ENCODE measurements at regions of chr11 and their contacts with region 1.

Region 1: GRCh38 chr11:75142714-75143419 is 8.0 kb upstream of the SLCO2B1 start:
- DNase-seq: no peak
- H3K4me3 ChIP-seq: no peak overlapping the region
- H3K27ac ChIP-seq: peak overlapping the region in 2 of 4 donors; percentile 19 to 42
- H3K4me1 ChIP-seq: peaks cover 9 to 40% (median 11%) of the 10 kb centered on the region in 3 donors
- H3K27me3 ChIP-seq: peaks cover 0 to 8% (median 0%) of the 10 kb centered on the region in 4 donors
- CTCF ChIP-seq: peak in 2 of 6 experiments; percentile 3 to 12
- POLR2A ChIP-seq: no peak

Region 2: DNA sequence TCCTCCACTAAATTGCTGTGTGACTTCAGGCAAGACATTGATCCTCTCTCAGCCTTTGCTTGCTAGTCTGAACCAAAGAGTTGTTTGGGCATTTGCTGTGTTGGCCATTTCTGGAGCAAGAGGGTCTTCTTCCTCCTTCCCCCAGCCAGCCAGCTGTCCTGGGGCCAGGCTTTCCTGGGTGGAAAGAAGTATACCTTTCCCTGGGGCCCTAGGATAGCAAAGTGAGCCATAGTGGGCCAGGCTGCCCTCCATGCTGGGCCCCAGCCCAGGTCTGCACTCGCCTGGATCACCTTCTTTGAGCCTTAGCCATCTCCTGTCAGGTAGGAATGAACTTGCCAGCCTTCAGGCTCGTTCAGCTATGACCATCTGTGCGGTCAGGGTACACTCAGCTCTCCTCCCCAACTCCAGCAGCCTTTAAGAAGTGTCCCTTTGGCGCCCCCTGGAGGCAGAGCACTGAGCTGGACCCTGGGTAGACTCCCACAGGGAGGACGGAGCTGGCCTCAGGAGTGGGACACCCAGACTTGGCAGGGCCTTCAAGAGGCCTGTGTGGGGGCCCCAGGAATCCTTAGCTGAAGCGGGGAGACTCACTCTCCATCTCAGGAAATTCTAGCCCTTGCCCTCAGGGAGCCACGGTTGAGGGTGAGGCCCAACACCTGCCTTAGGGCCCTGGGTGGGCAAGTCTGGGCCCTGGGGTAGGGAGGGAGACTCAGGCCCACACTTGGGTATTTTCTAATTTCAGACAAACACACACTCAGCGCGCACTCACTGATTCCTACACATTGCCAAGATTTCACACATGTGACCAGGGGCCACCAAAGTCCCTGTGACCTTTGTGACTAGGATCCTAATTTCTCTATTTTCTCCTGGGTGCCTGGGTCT is 62.1 kb after region 1 on chr11:
- intact Hi-C with region 1: loop called (anchors 2 kb)
- DNase-seq: no peak
- H3K4me3 ChIP-seq: no peak overlapping the region
- H3K27ac ChIP-seq: no peak overlapping the region
- H3K4me1 ChIP-seq: no peaks in the 10 kb centered on the region
- H3K27me3 ChIP-seq: peaks cover 0 to 22% (median 0%) of the 10 kb centered on the region in 4 donors
- CTCF ChIP-seq: peak; percentile 63 to 87 (median 84)
- POLR2A ChIP-seq: no peak

Region 3: GRCh38 chr11:75248690-75249268 is 105.9 kb after region 1 on chr11:
- intact Hi-C with region 1: loop called (anchors 5 kb)
- DNase-seq: no peak
- H3K4me3 ChIP-seq: no peak overlapping the region
- H3K27ac ChIP-seq: no peak overlapping the region
- H3K4me1 ChIP-seq: no peaks in the 10 kb centered on the region
- H3K27me3 ChIP-seq: peaks cover 0 to 33% (median 0%) of the 10 kb centered on the region in 4 donors
- CTCF ChIP-seq: peak; percentile 89 to 98 (median 98)
- POLR2A ChIP-seq: no peak